ENCODE measurements at regions of chr10 and their contacts with region 1.

Region 1: DNA sequence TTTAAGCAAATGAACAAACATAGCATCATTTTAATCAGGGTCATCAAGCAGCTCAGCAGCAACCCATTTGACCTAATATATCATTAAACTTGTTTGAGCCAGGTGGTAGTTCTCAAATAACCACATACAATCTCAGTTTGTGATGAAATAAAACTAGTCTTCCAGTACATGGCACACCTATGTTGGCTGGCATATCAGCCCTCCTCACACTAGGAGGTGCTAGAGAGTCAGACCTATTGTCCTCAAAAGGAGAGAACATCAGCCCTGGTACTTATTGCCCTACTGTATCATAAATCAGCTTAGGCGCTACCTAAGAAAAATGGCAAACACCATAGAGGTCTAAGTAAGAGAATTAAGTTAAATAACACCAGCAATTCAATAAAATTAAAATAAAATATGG is 81.7 kb downstream of the CABCOCO1 start:
- DNase-seq: no peak
- ATAC-seq: no peak
- H3K4me3 ChIP-seq: no peak overlapping the region
- H3K27ac ChIP-seq: no peak overlapping the region
- H3K4me1 ChIP-seq: no peaks in the 10 kb centered on the region
- H3K27me3 ChIP-seq: no peaks in the 10 kb centered on the region
- CTCF ChIP-seq: no peak

Region 2: GRCh38 chr10:62250594-62251198 is 506.2 kb after region 1 on chr10:
- intact Hi-C with region 1: loop called in 1 of 10 experiments (anchors 10 kb)
- DNase-seq: no peak
- ATAC-seq: no peak
- H3K4me3 ChIP-seq: no peak overlapping the region
- H3K27ac ChIP-seq: no peak overlapping the region
- H3K4me1 ChIP-seq: no peaks in the 10 kb centered on the region
- H3K27me3 ChIP-seq: no peaks in the 10 kb centered on the region
- CTCF ChIP-seq: no peak